ENCODE measurements at regions of chr20 and their contacts with region 1.

Region 1: DNA sequence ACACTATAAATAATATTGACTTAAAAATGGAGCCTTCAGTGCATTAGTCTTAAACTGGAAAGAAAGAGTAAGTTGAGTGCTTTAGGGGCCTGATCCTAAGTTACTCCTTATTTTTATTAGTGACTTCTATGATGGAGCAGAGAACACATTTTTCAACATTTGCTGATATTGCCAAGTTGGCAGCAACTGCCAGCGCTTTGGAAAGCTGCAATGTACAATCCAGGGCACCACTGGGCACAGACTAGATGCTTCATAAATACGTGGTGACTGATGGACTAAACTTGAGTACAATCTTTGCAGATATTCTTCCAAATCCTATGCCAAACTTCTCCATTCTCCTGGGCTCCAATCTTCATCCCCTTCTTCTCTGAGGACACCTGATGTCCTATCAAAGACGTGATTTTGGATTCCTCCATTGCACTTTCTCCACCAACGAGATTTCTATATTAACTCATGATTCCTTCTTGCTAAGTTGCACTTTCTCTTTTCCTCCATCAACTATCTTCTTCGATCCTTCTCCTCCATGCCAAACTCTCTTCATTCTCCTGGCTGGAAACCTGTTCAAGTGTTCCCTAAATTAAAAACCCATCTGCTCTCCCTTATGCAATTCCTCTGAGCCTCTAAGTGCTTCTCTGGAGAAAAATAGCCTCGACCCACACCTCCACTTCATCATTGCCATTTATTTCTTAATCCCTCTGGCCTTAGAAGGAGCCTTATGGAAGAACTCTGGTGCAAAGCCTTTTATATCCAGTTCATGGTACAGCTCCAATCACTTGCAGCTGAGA is 28.5 kb upstream of the PAK5 start:
- DNase-seq: no peak
- ATAC-seq: no peak
- H3K4me3 Mint-ChIP-seq: no peak overlapping the region
- H3K27ac Mint-ChIP-seq: no peak overlapping the region
- H3K4me1 Mint-ChIP-seq: no peaks in the 10 kb centered on the region
- H3K27me3 Mint-ChIP-seq: no peaks in the 10 kb centered on the region; the same call in 1 of the 2 replicates
- CTCF ChIP-seq: no peak

Region 2: GRCh38 chr20:9739991-9740390 is 127.4 kb before region 1 on chr20:
- CTCF ChIA-PET with region 1: no interaction called
- POLR2A ChIA-PET with region 1: no interaction called
- DNase-seq: no peak
- ATAC-seq: no peak
- H3K4me3 Mint-ChIP-seq: no peak overlapping the region
- H3K27ac Mint-ChIP-seq: no peak overlapping the region
- H3K4me1 Mint-ChIP-seq: no peaks in the 10 kb centered on the region
- H3K27me3 Mint-ChIP-seq: no peaks in the 10 kb centered on the region; the same call in 1 of the 2 replicates
- CTCF ChIP-seq: no peak

Region 3: DNA sequence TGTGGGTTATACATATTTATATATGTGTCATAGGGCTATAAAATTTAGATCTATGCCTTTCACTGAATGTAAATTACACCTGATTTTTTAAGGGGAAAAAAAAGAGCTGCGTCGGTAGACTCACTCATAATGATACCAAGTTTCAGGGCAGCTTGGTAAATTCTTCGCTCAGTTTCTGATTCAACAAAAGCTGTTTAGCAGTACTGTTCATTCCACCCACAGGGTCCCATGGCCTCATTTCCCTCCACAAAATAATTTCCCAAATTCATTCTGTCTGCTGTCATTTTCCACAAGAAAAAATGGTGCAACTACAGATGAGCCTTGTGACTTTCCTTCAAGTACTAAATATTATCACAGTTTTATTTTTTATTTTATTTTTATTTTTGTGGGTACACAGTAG is 92.2 kb before region 1 on chr20:
- CTCF ChIA-PET with region 1: no interaction called
- POLR2A ChIA-PET with region 1: interaction called, 10 read pairs
- DNase-seq: no peak
- ATAC-seq: no peak
- H3K4me3 Mint-ChIP-seq: no peak overlapping the region
- H3K27ac Mint-ChIP-seq: no peak overlapping the region
- H3K4me1 Mint-ChIP-seq: no peaks in the 10 kb centered on the region
- H3K27me3 Mint-ChIP-seq: no peaks in the 10 kb centered on the region; the same call in 1 of the 2 replicates
- CTCF ChIP-seq: no peak

Region 4: GRCh38 chr20:10219452-10219791 is 352.0 kb after region 1 on chr20:
- CTCF ChIA-PET with region 1: no interaction called
- POLR2A ChIA-PET with region 1: no interaction called
- DNase-seq: peak; percentile 83
- ATAC-seq: peak; percentile 62
- H3K4me3 Mint-ChIP-seq: peak overlapping the region; percentile 88
- H3K27ac Mint-ChIP-seq: 0 out of 2 replicates have a peak overlapping the region, but pooled peaks have one; percentile 37
- H3K4me1 Mint-ChIP-seq: peaks cover 15% of the 10 kb centered on the region
- H3K27me3 Mint-ChIP-seq: peaks cover 43% of the 10 kb centered on the region
- CTCF ChIP-seq: no peak

Measured in WTC11 (cell line).